ENCODE measurements at regions of chr1 and their contacts with region 1.

Region 1: GRCh38 chr1:165575468-165576099 is 31.8 kb downstream of the LRRC52 start:
- DNase-seq: no peak
- H3K4me3 ChIP-seq: no peak overlapping the region
- H3K4me3 Mint-ChIP-seq: no peak overlapping the region
- H3K27ac Mint-ChIP-seq: no peak overlapping the region
- H3K4me1 ChIP-seq: no peaks in the 10 kb centered on the region
- H3K4me1 Mint-ChIP-seq: peaks cover 2% of the 10 kb centered on the region
- H3K27me3 ChIP-seq: no peaks in the 10 kb centered on the region
- H3K27me3 Mint-ChIP-seq: peaks cover 7% of the 10 kb centered on the region
- CTCF ChIP-seq: no peak

Region 2: GRCh38 chr1:165474196-165474595 is 101.4 kb before region 1 on chr1:
- CTCF ChIA-PET with region 1: no interaction called
- POLR2A ChIA-PET with region 1: no interaction called
- intact Hi-C with region 1: loop called (anchors 5 kb)
- DNase-seq: no peak
- H3K4me3 ChIP-seq: no peak overlapping the region
- H3K4me3 Mint-ChIP-seq: no peak overlapping the region
- H3K27ac Mint-ChIP-seq: no peak overlapping the region
- H3K4me1 ChIP-seq: no peaks in the 10 kb centered on the region
- H3K4me1 Mint-ChIP-seq: no peaks in the 10 kb centered on the region
- H3K27me3 ChIP-seq: no peaks in the 10 kb centered on the region
- H3K27me3 Mint-ChIP-seq: peaks cover 24% of the 10 kb centered on the region
- CTCF ChIP-seq: no peak

Region 3: DNA sequence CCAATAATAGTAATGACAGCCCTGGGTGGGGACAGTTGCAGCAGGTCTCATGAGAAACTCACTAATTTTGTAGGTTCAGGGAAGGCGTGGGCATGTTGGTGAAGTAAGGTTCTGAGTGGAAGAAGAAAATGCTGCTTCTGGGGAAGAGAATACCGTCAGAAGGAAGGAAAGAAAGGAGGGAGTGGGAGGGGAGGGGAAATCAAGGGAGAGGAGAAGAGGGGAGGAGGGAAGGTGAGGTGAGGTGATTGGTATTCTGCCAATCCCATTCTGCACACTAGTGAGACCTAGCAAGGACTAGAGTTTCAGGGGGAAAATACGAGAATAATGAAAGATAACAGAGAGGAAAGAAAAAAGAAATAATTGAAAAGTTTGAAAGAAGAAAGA is 23.1 kb after region 1 on chr1:
- CTCF ChIA-PET with region 1: no interaction called
- POLR2A ChIA-PET with region 1: no interaction called
- intact Hi-C with region 1: no loop called
- DNase-seq: no peak
- H3K4me3 ChIP-seq: peak overlapping the region; percentile 64
- H3K4me3 Mint-ChIP-seq: peak overlapping the region; percentile 95
- H3K27ac Mint-ChIP-seq: peak overlapping the region; percentile 88
- H3K4me1 ChIP-seq: no peaks in the 10 kb centered on the region
- H3K4me1 Mint-ChIP-seq: peaks cover 20% of the 10 kb centered on the region
- H3K27me3 ChIP-seq: 0 out of 2 replicates have a peak, but pooled peaks cover 1% of the 10 kb centered on the region
- H3K27me3 Mint-ChIP-seq: peaks cover 4% of the 10 kb centered on the region
- CTCF ChIP-seq: no peak

Measured in Caco-2 (cell line).